CD8-positive, alpha-beta T cell (primary cell): ENCODE measurements at regions of chr2 and their contacts with region 1.

Region 1: DNA sequence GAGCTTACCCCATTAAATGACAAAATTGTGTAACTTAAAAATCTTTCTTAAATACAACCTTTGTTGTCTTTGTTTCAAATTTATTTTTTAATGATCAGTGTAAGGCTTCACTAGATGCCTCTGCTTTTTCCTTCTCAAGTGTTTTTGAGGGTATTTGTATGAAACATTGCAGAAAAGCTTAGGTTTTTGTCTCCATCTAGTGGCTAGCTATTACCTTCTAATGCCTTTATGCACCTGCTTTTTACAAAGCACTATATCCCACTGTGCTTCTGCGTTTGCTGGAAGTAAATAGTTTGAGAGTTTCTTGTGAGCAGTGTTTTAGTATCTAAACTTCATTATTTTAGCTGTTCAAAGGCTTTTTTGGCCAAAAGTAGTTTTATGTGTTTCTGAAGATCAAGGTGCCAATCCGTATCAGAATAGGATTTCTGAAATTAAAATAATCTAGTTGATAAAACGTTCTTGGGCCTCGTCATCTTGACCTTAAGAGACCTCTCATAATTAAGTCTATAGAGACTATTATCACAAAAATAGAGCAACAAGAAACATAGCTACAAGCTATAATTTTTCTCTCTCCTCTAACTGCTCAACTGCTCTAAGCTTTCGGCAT is 47.0 kb downstream of the IWS1 start:
- DNase-seq: peak in 2 of 9 experiments; percentile 53 to 67
- ATAC-seq: peak; percentile 62
- H3K4me3 ChIP-seq: no peak overlapping the region
- H3K4me3 Mint-ChIP-seq: no peak overlapping the region
- H3K27ac ChIP-seq: no peak overlapping the region
- H3K27ac Mint-ChIP-seq: no peak overlapping the region
- H3K4me1 ChIP-seq: no peaks in the 10 kb centered on the region
- H3K4me1 Mint-ChIP-seq: no peaks in the 10 kb centered on the region
- H3K27me3 ChIP-seq: no peaks in the 10 kb centered on the region
- H3K27me3 Mint-ChIP-seq: no peaks in the 10 kb centered on the region
- CTCF ChIP-seq: peak; percentile 67

Region 2: DNA sequence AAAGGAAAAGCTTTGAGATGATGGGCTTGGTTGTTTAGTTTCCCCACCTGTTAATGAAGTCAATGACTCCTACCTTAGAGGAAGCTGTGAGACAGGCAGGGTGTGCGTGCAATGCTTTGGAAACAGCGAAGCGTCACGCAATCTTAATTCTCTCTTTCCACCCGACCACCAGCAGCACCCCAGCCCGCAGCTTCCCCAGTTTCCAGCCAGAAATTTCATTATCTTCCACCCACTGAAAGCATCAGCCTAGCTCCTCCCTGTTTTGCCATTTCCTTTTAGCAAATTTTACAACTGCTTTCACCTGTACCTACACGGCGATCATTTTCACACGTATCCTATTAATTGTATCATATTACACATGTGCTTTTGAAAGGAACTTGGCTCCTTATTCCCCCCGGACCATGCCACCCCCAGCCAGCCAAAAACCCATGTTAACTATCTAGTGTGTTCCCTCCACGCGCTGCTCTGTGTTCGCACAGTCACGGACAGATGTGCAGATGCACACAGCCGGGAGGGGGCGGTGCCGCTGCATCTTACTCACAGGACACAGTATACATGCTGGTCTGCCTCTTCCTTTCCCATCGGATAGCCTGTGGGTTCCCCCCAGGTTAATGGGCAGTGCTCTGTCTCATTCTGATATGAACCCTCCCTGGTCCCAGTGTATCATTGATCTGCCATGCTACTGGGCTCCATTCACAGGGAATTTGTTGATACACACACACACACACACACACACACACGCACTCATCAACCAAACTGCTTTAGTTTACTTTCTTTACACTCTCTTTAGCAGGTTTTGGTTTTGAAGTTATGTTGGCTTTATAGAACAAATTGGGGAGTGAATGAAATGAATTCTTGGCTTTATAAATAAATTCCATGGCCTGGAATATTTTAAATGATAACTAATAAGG is 281.6 kb before region 1 on chr2:
- CTCF ChIA-PET with region 1: interaction called, 11 read pairs
- POLR2A ChIA-PET with region 1: no interaction called
- intact Hi-C with region 1: loop called in 1 of 2 experiments (anchors 2 kb)
- DNase-seq: peak in 8 of 9 experiments; percentile 18 to 70 (median 54)
- ATAC-seq: peak; percentile 62
- H3K4me3 ChIP-seq: peak overlapping the region in 1 of 2 experiments; percentile 18
- H3K4me3 Mint-ChIP-seq: peak overlapping the region; percentile 69
- H3K27ac ChIP-seq: no peak overlapping the region
- H3K27ac Mint-ChIP-seq: no peak overlapping the region
- H3K4me1 ChIP-seq: no peaks in the 10 kb centered on the region
- H3K4me1 Mint-ChIP-seq: no peaks in the 10 kb centered on the region
- H3K27me3 ChIP-seq: no peaks in the 10 kb centered on the region
- H3K27me3 Mint-ChIP-seq: no peaks in the 10 kb centered on the region
- CTCF ChIP-seq: no peak

Region 3: DNA sequence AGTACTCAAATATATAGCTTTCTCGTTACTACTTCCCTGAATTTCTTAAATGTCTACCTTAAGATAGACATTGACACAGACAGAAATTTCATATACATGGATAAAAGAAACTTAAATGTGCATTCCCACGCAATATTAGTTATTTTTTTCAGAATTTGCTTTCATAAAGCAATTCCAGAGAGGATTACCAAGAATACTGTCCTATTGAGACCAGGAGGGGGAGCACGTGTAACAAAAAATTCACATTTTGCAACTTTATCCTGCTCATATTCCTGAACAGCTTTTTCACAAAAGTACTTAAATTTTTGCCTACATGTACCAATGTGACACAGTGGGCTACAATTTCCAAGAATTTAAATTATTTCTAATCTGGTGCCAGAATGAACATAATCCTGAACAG is 154.7 kb before region 1 on chr2:
- CTCF ChIA-PET with region 1: interaction called, 20 read pairs
- POLR2A ChIA-PET with region 1: no interaction called
- intact Hi-C with region 1: loop called (anchors 1 to 2 kb)
- DNase-seq: peak in 2 of 9 experiments; percentile 17 to 28
- ATAC-seq: no peak
- H3K4me3 ChIP-seq: no peak overlapping the region
- H3K4me3 Mint-ChIP-seq: no peak overlapping the region
- H3K27ac ChIP-seq: no peak overlapping the region
- H3K27ac Mint-ChIP-seq: no peak overlapping the region
- H3K4me1 ChIP-seq: no peaks in the 10 kb centered on the region
- H3K4me1 Mint-ChIP-seq: no peaks in the 10 kb centered on the region
- H3K27me3 ChIP-seq: no peaks in the 10 kb centered on the region
- H3K27me3 Mint-ChIP-seq: no peaks in the 10 kb centered on the region
- CTCF ChIP-seq: no peak

Region 4: GRCh38 chr2:127355386-127356008 is 123.8 kb before region 1 on chr2:
- CTCF ChIA-PET with region 1: interaction called, 6 read pairs
- POLR2A ChIA-PET with region 1: no interaction called
- intact Hi-C with region 1: loop called (anchors 1 kb)
- DNase-seq: peak in 6 of 9 experiments; percentile 5 to 71 (median 38)
- ATAC-seq: peak; percentile 74
- H3K4me3 ChIP-seq: no peak overlapping the region
- H3K4me3 Mint-ChIP-seq: no peak overlapping the region
- H3K27ac ChIP-seq: no peak overlapping the region
- H3K27ac Mint-ChIP-seq: no peak overlapping the region
- H3K4me1 ChIP-seq: peaks cover 4% of the 10 kb centered on the region
- H3K4me1 Mint-ChIP-seq: peaks cover 68% of the 10 kb centered on the region
- H3K27me3 ChIP-seq: no peaks in the 10 kb centered on the region
- H3K27me3 Mint-ChIP-seq: no peaks in the 10 kb centered on the region
- CTCF ChIP-seq: peak; percentile 79

Region 5: GRCh38 chr2:127464470-127465257 is 14.7 kb before region 1 on chr2:
- CTCF ChIA-PET with region 1: interaction called, 10 read pairs
- POLR2A ChIA-PET with region 1: interaction called, 4 read pairs
- intact Hi-C with region 1: no loop called
- DNase-seq: no peak
- ATAC-seq: no peak
- H3K4me3 ChIP-seq: no peak overlapping the region
- H3K4me3 Mint-ChIP-seq: no peak overlapping the region
- H3K27ac ChIP-seq: no peak overlapping the region
- H3K27ac Mint-ChIP-seq: no peak overlapping the region
- H3K4me1 ChIP-seq: no peaks in the 10 kb centered on the region
- H3K4me1 Mint-ChIP-seq: peaks cover 12% of the 10 kb centered on the region
- H3K27me3 ChIP-seq: no peaks in the 10 kb centered on the region
- H3K27me3 Mint-ChIP-seq: no peaks in the 10 kb centered on the region
- CTCF ChIP-seq: no peak